Activated B cell treated with CpG ODN at 0.5 μM for 24 hours (primary cell): ENCODE measurements at regions of chr18 and their contacts with region 1.

Region 1: GRCh38 chr18:55139836-55140235 is 180.6 kb upstream of the CCDC68 start:
- DNase-seq: no peak
- ATAC-seq: no peak
- H3K4me3 Mint-ChIP-seq: no peak overlapping the region
- H3K27ac Mint-ChIP-seq: no peak overlapping the region
- H3K4me1 Mint-ChIP-seq: peaks cover 5% of the 10 kb centered on the region
- H3K27me3 Mint-ChIP-seq: peaks cover 4% of the 10 kb centered on the region
- CTCF ChIP-seq: no peak

Region 2: DNA sequence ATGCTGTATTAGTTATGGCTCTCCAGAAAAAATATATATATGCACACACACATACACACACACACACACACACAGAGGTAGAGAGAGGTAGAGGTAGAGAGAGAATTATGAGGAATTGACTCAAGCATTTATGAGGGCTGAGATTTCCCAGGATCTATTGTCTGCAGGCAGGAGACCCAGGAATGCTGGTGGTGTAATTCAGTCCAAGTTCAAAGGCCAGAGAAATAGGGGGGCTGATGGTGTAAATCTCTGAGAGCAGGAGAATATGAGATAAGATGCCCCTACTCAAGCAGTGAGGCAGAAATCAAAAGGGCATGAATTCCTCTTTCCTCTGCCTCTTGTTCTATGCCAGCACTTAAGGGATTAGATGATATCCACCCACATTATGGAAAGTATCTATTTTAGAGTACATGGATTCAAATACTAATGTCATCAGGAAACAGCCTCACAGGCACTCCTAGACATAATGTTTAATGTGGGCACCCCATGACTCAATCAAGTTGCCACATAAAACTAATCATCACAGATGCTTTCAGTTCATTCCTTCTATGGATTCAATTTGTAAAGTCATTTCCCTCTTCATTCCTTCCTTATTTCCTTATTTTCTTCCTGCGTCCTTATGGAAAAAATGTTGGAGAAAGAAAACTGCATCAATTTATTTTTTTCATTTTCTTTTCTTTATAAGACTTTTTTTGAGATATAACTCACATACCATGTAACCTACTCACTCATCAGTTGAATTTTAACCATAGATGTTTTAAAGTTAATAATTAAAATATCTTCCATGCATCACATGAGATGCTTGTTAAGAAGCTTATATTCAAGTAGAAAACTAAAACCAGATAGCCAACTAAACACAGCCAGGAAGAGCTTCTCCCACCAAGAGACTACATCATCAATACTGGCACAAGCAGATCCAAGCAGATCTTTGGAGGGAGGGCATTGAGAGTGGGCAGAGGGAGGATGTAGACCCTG is 1321.6 kb before region 1 on chr18:
- CTCF ChIA-PET with region 1: no interaction called
- POLR2A ChIA-PET with region 1: no interaction called
- intact Hi-C with region 1: no loop called
- DNase-seq: no peak
- ATAC-seq: no peak
- H3K4me3 Mint-ChIP-seq: no peak overlapping the region
- H3K27ac Mint-ChIP-seq: no peak overlapping the region
- H3K4me1 Mint-ChIP-seq: no peaks in the 10 kb centered on the region
- H3K27me3 Mint-ChIP-seq: no peaks in the 10 kb centered on the region
- CTCF ChIP-seq: no peak

Region 3: DNA sequence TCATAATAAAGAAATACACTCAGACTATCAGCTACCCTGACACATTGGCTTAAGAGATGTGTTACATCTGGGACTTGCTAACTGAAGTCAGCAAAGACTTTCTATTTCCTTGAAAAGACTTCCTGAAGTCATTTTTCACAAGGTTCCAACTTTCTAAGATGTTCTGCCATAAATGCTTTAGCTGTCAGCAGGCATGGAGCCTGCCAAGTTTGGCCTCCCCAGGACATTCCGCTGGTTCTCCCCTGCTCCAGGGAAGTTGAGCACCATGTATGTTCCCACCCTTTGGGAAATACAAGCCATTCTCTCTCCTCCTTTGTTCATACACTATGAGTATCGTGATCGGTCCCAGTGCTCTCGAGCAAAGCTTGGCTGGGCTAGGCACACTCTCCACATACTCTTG is 22.1 kb after region 1 on chr18:
- CTCF ChIA-PET with region 1: no interaction called
- POLR2A ChIA-PET with region 1: no interaction called
- intact Hi-C with region 1: no loop called
- DNase-seq: no peak
- ATAC-seq: no peak
- H3K4me3 Mint-ChIP-seq: no peak overlapping the region
- H3K27ac Mint-ChIP-seq: no peak overlapping the region
- H3K4me1 Mint-ChIP-seq: peaks cover 2% of the 10 kb centered on the region
- H3K27me3 Mint-ChIP-seq: no peaks in the 10 kb centered on the region
- CTCF ChIP-seq: no peak

Region 4: DNA sequence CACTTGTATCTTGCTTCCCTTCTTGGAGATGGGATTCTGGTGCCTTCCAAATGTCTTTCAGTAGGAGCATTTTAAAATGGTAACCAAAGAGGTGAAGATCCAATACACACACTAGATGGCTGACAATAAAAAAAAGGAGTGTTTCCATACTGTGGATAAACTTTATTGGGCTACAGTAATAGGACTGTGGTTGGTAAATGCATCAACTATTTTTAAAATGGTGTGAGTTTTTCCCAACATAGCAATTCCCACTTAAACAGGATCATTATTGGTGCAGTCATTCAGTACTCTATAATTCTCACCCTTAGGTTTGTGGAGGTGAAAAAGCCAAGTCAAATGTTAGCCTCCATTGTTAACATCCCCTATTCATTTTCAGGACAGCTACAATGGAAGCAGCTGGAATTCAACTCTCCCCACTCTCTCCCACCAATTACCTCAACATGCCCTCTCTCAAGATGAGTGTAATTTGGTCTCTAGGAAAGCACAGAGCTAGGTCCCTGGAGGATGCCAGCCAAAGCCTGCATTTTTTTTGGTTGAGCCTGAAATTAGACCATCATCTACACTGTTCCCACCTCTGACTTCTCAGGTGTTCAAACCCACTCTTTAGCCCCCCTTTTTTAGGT is 174.9 kb after region 1 on chr18:
- CTCF ChIA-PET with region 1: no interaction called
- POLR2A ChIA-PET with region 1: interaction called, 13 read pairs
- intact Hi-C with region 1: no loop called
- DNase-seq: no peak
- ATAC-seq: no peak
- H3K4me3 Mint-ChIP-seq: peak overlapping the region; percentile 25
- H3K27ac Mint-ChIP-seq: peak overlapping the region; percentile 43
- H3K4me1 Mint-ChIP-seq: peaks cover 94% of the 10 kb centered on the region
- H3K27me3 Mint-ChIP-seq: no peaks in the 10 kb centered on the region
- CTCF ChIP-seq: no peak